Ascending aorta (tissue), 2 donors: ENCODE measurements at regions of chr5 and their contacts with region 1.

Region 1: GRCh38 chr5:178204182-178204894 is at the start of gene HNRNPAB:
- DNase-seq: peak; percentile 82 to 97
- H3K4me3 ChIP-seq: peak within 1 kb of the TSS; percentile 97 to 100
- H3K27ac ChIP-seq: peak within 1 kb of the TSS; percentile 92 to 96
- H3K4me1 ChIP-seq: peaks cover 8 to 17% of the 10 kb centered on the region in 2 donors
- H3K27me3 ChIP-seq: no peaks in the 10 kb centered on the region
- CTCF ChIP-seq: no peak
- total RNA-seq, gene HNRNPAB: 99.2 TPM

Region 2: DNA sequence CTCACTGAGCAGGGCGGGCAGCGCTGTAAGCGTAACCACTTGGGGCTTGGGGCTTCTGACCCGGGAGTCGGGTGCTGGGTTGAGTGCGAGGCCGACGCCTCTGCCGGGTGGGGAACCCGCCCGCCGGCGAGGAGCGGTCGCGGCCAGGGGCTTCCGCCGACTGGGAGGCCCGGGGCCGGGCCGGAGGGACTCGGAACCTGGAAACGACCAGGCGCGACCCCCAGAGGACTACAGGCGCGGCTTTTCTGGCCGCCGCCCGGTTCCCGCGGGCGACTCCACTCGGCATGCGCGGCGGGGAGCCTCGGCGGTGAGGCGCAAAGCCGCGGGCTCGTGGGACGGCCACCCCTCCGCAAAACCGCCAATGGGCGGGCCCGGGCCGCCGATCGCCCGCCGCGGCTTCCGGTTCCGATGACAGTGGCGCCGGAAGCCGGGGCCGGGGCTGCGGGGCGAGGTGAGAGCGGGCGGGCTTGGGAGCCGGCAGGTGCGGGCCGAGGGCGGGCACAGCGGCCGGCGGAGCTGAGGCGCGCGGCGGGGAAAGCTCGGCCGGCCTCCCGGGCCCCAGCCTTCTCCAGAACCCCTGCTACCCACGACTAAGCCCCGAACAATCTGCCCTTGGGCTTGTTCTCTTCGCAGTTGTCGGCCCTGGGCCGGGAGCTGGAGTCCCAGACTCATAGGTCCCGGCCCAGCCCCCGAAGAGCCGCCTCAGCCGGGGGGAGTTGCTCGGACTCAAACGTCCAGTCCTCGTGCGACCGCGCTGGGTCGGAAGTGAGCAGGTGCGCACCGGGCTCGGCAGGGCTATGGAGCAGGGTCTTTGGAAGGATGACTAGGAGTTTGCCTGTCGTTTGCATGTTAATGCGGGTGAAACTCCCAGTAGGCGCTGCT is 73.5 kb before region 1 on chr5 and contains the start of gene RMND5B:
- intact Hi-C with region 1: loop called (anchors 1 kb)
- DNase-seq: peak in 1 of 2 donors; percentile 89
- H3K4me3 ChIP-seq: peak within 1 kb of the TSS; percentile 78 to 80
- H3K27ac ChIP-seq: peak within 1 kb of the TSS; percentile 93 to 95
- H3K4me1 ChIP-seq: peaks cover 0 to 12% of the 10 kb centered on the region in 2 donors
- H3K27me3 ChIP-seq: no peaks in the 10 kb centered on the region
- CTCF ChIP-seq: no peak
- total RNA-seq, gene RMND5B: 81.6 TPM

Region 3: DNA sequence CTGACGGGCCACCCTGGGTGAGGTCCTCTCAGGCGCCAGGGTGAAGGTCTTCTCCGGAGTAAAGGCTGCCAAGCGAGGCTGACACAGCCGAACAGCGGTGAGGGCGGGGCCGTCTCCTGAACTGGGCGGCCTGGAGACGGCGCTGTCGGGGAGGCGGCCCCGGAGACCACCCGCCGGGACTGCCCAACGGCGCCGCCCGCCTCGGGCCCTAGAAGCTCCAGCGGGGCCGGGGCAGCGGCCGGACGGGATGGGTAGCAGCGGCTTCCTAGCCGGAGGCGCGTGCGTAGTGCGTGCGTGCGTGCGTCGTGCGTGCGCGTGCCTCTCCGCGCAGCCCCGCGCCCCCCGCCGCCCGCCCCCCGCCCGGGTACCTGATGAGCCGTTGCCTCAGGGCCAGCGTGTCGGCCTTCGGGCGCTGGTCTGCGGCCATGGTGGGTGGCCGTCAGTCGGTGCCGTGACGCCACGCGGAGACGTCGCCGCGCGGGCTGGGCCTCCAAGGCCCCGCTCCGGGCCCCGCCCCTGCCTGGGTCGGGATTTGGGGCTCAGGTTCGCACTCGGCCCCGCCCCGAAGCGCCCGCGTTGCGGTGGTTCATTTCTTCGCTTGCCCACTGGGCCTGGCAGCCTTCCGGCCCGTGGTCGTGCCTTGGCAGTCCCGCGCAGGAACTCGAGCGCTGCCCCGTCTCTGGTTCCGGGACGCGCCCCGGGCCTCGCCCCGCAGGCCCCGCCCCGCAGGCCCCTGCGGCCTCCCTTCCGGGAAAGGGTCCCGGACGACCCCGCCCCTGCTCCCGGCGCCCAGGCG is 28.0 kb after region 1 on chr5 and contains the start of gene PHYKPL:
- intact Hi-C with region 1: loop called (anchors 1 kb)
- DNase-seq: peak in 1 of 2 donors; percentile 84
- H3K4me3 ChIP-seq: peak within 1 kb of the TSS; percentile 81 to 87
- H3K27ac ChIP-seq: peak within 1 kb of the TSS; percentile 97
- H3K4me1 ChIP-seq: peaks cover 10 to 18% of the 10 kb centered on the region in 2 donors
- H3K27me3 ChIP-seq: no peaks in the 10 kb centered on the region
- CTCF ChIP-seq: peak in 1 of 3 experiments; percentile 10
- total RNA-seq, gene PHYKPL: 89.3 TPM

Region 4: DNA sequence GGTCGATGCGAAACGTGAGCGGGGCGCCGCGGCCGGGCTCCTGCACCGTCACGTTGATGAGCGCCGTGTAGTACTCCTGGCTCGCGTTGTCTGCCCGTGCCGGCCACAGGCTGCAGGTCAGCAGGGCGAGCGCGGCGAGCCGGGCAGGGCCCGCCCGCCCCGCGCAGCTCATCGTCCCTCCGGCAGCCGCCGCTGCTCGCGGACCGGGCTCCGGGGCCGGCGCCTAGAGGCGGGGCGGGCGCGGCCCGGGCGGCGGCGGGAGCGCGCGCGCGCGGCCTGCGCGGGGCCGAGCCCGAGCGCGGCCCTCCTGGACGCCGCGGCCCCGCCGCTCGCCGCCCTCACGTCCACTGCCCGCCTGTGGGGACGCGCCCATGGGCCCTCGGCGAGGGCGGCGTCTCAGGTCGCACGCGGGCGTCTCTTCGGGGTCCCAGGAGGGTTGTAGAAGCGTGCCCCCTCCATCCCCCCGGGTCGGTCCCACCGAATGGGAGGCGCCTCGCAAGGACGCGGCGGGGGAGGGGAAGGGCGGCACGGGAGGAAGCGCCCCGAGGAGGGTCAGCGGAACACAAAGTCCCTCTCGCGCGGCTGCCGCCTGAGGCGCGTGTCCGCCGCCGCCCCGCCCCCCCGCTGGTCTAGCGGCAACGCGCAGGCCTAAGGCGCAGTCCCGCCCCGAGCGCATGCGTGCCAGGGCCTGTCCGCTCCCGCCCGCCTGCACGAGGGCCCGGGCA is 1867.4 kb after region 1 on chr5 and contains the start of gene RNF130:
- intact Hi-C with region 1: loop called (anchors 10 kb)
- DNase-seq: peak; percentile 72 to 95
- H3K4me3 ChIP-seq: peak within 1 kb of the TSS; percentile 74 to 94
- H3K27ac ChIP-seq: peak within 1 kb of the TSS; percentile 94 to 98
- H3K4me1 ChIP-seq: peaks cover 0 to 10% of the 10 kb centered on the region in 2 donors
- H3K27me3 ChIP-seq: no peaks in the 10 kb centered on the region
- CTCF ChIP-seq: no peak
- total RNA-seq, gene RNF130: 86.7 TPM